GM12878 (cell line): ENCODE measurements at regions of chr2 and their contacts with region 1.

Region 1: GRCh38 chr2:86079981-86080911 is 25.4 kb downstream of the POLR1A start:
- DNase-seq: peak; percentile 45
- ATAC-seq: peak; percentile 95
- H3K4me3 ChIP-seq: no peak overlapping the region
- H3K27ac ChIP-seq: peak overlapping the region; percentile 26; the same call in 1 of the 2 replicates
- H3K4me1 ChIP-seq: peaks cover 14% of the 10 kb centered on the region
- H3K27me3 ChIP-seq: no peaks in the 10 kb centered on the region
- CTCF ChIP-seq: peak; percentile 80 to 90 (median 82)
- EP300 ChIP-seq: no peak
- POLR2A ChIP-seq: no peak
- RAD21 ChIP-seq: peak; percentile 83

Region 2: GRCh38 chr2:85561317-85561979 is 518.8 kb before region 1 on chr2 and contains the start of gene GGCX:
- CTCF ChIA-PET with region 1: no interaction called
- POLR2A ChIA-PET with region 1: no interaction called
- RAD21 ChIA-PET with region 1: no interaction called
- SMC1A ChIA-PET with region 1: no interaction called
- in situ Hi-C with region 1: no loop called
- intact Hi-C with region 1: no loop called
- DNase-seq: peak; percentile 73
- ATAC-seq: peak; percentile 97
- H3K4me3 ChIP-seq: peak within 1 kb of the TSS; percentile 98
- H3K27ac ChIP-seq: peak within 1 kb of the TSS; percentile 71
- H3K4me1 ChIP-seq: no peaks in the 10 kb centered on the region; the same call in 1 of the 2 replicates
- H3K27me3 ChIP-seq: no peaks in the 10 kb centered on the region
- CTCF ChIP-seq: no peak
- EP300 ChIP-seq: 0 out of 4 replicates have a peak, but pooled peaks of 1 of the 2 experiments have one; percentile 14
- POLR2A ChIP-seq: peak; percentile 97
- RAD21 ChIP-seq: no peak
- polyA plus RNA-seq, gene GGCX: 46.6 to 52.7 TPM

Region 3: GRCh38 chr2:85728883-85729824 is 351.1 kb before region 1 on chr2:
- CTCF ChIA-PET with region 1: interaction called, 20 read pairs
- POLR2A ChIA-PET with region 1: no interaction called
- RAD21 ChIA-PET with region 1: interaction called, 18 read pairs
- SMC1A ChIA-PET with region 1: interaction called, 15 read pairs
- in situ Hi-C with region 1: loop called (anchors 10 kb)
- intact Hi-C with region 1: loop called (anchors 1 kb)
- DNase-seq: no peak
- ATAC-seq: peak; percentile 98
- H3K4me3 ChIP-seq: no peak overlapping the region
- H3K27ac ChIP-seq: no peak overlapping the region
- H3K4me1 ChIP-seq: no peaks in the 10 kb centered on the region; the same call in 1 of the 2 replicates
- H3K27me3 ChIP-seq: no peaks in the 10 kb centered on the region
- CTCF ChIP-seq: peak; percentile 96 to 99 (median 99); a peak in 5 of 6 replicates
- EP300 ChIP-seq: no peak
- POLR2A ChIP-seq: no peak
- RAD21 ChIP-seq: peak; percentile 94

Region 4: GRCh38 chr2:85819811-85820510 is 260.3 kb before region 1 on chr2:
- CTCF ChIA-PET with region 1: interaction called, 458 read pairs
- POLR2A ChIA-PET with region 1: no interaction called
- RAD21 ChIA-PET with region 1: interaction called, 214 read pairs
- SMC1A ChIA-PET with region 1: interaction called, 286 read pairs
- in situ Hi-C with region 1: loop called (anchors 5 kb)
- intact Hi-C with region 1: no loop called
- DNase-seq: no peak
- ATAC-seq: no peak; the same call in 2 of the 3 replicates
- H3K4me3 ChIP-seq: no peak overlapping the region
- H3K27ac ChIP-seq: no peak overlapping the region
- H3K4me1 ChIP-seq: no peaks in the 10 kb centered on the region
- H3K27me3 ChIP-seq: no peaks in the 10 kb centered on the region
- CTCF ChIP-seq: no peak
- EP300 ChIP-seq: no peak
- POLR2A ChIP-seq: no peak
- RAD21 ChIP-seq: no peak

Region 5: DNA sequence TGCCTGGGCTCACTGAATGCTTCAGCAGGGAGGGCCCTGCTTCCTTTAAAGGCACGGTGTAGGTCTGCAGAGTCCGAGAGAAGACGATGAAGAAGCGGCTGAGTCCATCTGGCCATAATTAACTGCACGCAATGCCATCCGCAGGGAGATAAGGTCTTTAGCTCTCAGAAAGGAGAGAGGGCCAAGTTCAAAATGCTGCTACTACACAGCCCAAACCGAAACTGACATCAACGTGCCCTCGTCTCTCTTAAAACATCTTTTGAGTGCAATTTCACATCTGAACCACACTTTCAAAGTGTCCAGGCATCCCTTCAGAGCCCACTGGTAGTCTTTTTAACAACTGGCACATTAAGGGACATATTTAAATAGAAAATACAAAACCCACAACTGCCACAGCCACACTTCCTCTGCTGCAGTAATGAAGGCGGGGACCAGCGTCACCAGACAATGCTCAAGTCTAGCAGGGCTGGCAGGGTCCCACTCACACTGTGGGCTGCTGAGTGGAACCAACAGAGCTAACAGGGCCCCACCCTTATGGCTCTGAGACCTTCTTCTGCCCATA is 227.2 kb before region 1 on chr2:
- CTCF ChIA-PET with region 1: interaction called, 11 read pairs
- POLR2A ChIA-PET with region 1: interaction called, 3 read pairs
- RAD21 ChIA-PET with region 1: interaction called, 10 read pairs
- SMC1A ChIA-PET with region 1: interaction called, 15 read pairs
- in situ Hi-C with region 1: no loop called
- intact Hi-C with region 1: no loop called
- DNase-seq: peak; percentile 88
- ATAC-seq: peak; percentile 84
- H3K4me3 ChIP-seq: peak overlapping the region; percentile 51; the same call in 1 of the 2 replicates
- H3K27ac ChIP-seq: peak overlapping the region; percentile 84
- H3K4me1 ChIP-seq: peaks cover 49% of the 10 kb centered on the region
- H3K27me3 ChIP-seq: no peaks in the 10 kb centered on the region
- CTCF ChIP-seq: no peak
- EP300 ChIP-seq: peak; percentile 5 to 51; a peak in 1 of 4 replicates
- POLR2A ChIP-seq: peak; percentile 57; the same call in 1 of the 2 replicates
- RAD21 ChIP-seq: no peak

Region 6: DNA sequence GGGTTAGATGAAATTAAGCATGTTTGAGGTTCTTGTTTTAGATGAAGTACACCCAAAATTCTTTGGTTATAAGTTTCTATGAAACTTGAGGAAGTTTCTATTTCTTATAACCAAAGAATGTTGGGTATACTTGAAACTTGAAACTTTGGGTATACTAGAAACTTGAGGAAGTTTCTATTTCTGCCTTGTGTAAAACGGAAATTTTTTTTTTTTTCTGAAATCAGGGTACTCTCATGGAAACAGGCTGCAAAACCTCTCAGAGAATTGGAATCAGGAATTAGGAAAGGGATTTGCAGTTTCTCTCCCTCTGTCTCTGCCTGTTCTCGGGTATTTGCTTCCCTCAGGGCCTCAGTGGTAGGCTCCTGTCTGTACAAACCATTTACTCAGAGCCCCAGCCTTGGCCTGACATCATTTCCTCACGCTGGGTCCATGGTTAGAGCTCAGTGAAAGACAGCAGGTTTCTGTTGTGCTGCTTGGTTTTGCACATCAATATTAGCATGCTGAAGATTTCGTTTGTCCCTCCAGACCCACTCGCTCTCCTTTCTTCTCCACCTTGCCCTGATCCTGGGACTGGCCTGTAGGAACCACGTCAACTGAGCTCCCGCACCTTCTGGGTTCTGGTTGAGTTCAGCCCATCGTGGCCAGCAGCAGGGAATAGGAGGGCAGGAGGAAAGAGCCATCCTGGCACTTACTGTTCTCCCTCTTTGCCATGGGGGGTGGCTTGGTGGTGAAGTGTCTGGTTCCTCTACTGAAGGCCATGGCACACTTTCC is 81.0 kb before region 1 on chr2:
- CTCF ChIA-PET with region 1: interaction called, 25 read pairs
- POLR2A ChIA-PET with region 1: interaction called, 6 read pairs
- RAD21 ChIA-PET with region 1: interaction called, 25 read pairs
- SMC1A ChIA-PET with region 1: interaction called, 32 read pairs
- in situ Hi-C with region 1: no loop called
- intact Hi-C with region 1: no loop called
- DNase-seq: peak; percentile 77
- ATAC-seq: peak; percentile 87
- H3K4me3 ChIP-seq: peak overlapping the region; percentile 10; the same call in 1 of the 2 replicates
- H3K27ac ChIP-seq: peak overlapping the region; percentile 93
- H3K4me1 ChIP-seq: peaks cover 63% of the 10 kb centered on the region
- H3K27me3 ChIP-seq: no peaks in the 10 kb centered on the region
- CTCF ChIP-seq: no peak
- EP300 ChIP-seq: no peak
- POLR2A ChIP-seq: peak; percentile 64
- RAD21 ChIP-seq: no peak

Region 7: DNA sequence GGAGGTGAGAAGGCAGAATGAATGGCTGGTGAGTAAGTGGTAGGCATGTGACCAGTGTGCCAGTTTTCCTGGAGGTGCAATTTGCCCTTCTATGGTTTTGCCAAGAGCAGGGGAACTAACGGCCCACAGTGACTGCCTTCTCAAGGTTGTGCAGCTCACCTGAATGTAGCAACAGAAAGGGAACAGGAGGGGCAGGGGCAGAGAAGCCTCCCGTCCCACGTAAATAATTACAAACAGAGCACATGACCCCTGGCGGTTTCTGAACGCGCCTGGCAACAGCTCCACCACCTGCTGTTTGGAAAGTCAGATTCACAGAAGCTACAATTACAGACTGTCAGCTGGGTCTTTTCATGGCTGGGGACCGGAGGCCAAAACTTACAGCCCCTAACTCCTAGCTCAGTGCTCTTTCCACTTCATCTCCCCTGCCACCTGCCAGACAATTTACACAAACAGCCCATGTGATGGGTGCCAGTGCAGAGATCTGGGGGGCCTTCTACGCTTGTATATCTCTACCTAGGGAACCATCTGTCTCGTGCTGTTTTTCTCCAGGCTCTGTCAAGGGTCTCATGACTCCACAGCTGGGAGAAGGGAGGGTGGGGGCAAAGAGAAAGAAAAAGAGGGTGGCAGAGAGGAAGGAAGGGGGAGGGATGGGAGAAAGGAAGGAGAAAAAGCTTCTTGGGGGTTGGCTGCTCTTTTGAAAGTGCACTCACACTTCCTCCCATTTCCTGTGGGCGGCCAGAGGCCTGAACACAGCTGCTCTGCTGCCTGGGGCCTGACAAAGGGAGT is 44.2 kb before region 1 on chr2:
- CTCF ChIA-PET with region 1: interaction called, 75 read pairs
- POLR2A ChIA-PET with region 1: interaction called, 3 read pairs
- RAD21 ChIA-PET with region 1: interaction called, 68 read pairs
- SMC1A ChIA-PET with region 1: interaction called, 46 read pairs
- in situ Hi-C with region 1: no loop called
- intact Hi-C with region 1: no loop called
- DNase-seq: peak; percentile 71
- ATAC-seq: peak; percentile 92
- H3K4me3 ChIP-seq: peak overlapping the region; percentile 49; the same call in 1 of the 2 replicates
- H3K27ac ChIP-seq: peak overlapping the region; percentile 76
- H3K4me1 ChIP-seq: peaks cover 37% of the 10 kb centered on the region
- H3K27me3 ChIP-seq: no peaks in the 10 kb centered on the region
- CTCF ChIP-seq: peak; percentile 39 to 56 (median 49); a peak in 5 of 6 replicates
- EP300 ChIP-seq: peak; percentile 51 to 70
- POLR2A ChIP-seq: no peak; the same call in 1 of the 2 replicates
- RAD21 ChIP-seq: peak; percentile 66; the same call in 1 of the 2 replicates